Common myeloid progenitor, CD34-positive (primary cell): ENCODE measurements at regions of chr5 and their contacts with region 1.

Region 1: DNA sequence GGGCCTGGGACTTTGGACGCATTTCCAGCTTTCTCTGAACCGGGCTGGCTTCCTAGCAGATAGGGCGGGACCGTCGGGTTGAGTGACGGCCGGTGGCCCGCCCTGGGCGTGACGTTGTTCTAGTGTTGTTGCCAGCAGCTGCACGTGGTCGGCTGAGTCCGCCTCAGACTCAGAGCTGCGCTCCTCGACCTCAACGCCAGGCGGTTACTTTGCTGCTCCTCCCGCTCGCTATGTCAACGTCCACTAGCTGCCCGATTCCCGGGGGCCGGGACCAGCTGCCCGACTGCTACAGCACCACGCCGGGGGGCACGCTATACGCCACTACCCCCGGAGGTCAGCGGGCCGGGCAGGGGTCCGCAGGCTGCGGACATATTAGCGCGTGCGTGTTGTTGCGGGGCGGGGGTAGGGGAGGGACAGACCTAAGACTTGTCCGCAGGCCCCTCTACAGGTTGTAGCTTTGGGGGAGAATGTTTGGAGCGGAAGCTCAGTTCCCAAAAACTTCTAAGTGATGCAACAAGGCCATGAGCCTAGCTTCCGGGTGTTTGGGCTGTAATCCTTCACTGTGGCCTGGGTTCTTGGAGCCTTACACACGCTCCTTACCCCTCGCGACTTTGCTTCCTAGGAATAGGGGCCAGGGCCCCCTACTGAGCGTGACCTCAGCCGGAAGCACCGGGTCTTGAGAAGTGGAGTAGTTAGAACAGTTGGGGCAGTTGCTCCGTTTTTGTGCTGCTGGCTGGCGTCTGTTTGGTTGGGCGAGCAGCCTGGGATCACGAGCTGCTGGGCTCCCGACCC is at the start of gene EIF4EBP3:
- DNase-seq: peak; percentile 89 to 95 (median 94)
- H3K4me3 ChIP-seq: peak within 1 kb of the TSS; percentile 16 to 88 (median 62)
- H3K27ac ChIP-seq: peak within 1 kb of the TSS; percentile 42 to 83
- H3K4me1 ChIP-seq: peaks cover 8 to 34% (median 27%) of the 10 kb centered on the region in 4 experiments
- H3K27me3 ChIP-seq: no peaks in the 10 kb centered on the region

Region 2: GRCh38 chr5:140565024-140565779 is 17.5 kb after region 1 on chr5:
- CTCF ChIA-PET with region 1: interaction called, 29 read pairs
- POLR2A ChIA-PET with region 1: interaction called, 4 read pairs
- DNase-seq: no peak
- H3K4me3 ChIP-seq: peak overlapping the region; percentile 60 to 95 (median 81)
- H3K27ac ChIP-seq: peak overlapping the region; percentile 67 to 85
- H3K4me1 ChIP-seq: peaks cover 13 to 40% (median 33%) of the 10 kb centered on the region in 4 experiments
- H3K27me3 ChIP-seq: no peaks in the 10 kb centered on the region

Region 3: GRCh38 chr5:140588311-140589070 is 40.8 kb after region 1 on chr5:
- CTCF ChIA-PET with region 1: no interaction called
- POLR2A ChIA-PET with region 1: no interaction called
- DNase-seq: no peak
- H3K4me3 ChIP-seq: no peak overlapping the region
- H3K27ac ChIP-seq: no peak overlapping the region
- H3K4me1 ChIP-seq: peaks cover 0 to 10% (median under 1%) of the 10 kb centered on the region in 4 experiments
- H3K27me3 ChIP-seq: peaks cover 0 to 4% (median 0%) of the 10 kb centered on the region in 5 experiments

Region 4: GRCh38 chr5:140632150-140633020 is 84.7 kb after region 1 on chr5:
- CTCF ChIA-PET with region 1: interaction called, 69 read pairs
- POLR2A ChIA-PET with region 1: interaction called, 7 read pairs
- DNase-seq: peak in 2 of 3 donors; percentile 59 to 71
- H3K4me3 ChIP-seq: peak overlapping the region; percentile 27 to 74 (median 50)
- H3K27ac ChIP-seq: no peak overlapping the region
- H3K4me1 ChIP-seq: peaks cover 0 to 22% (median 17%) of the 10 kb centered on the region in 4 experiments
- H3K27me3 ChIP-seq: peaks cover 0 to 46% (median 26%) of the 10 kb centered on the region in 5 experiments

Region 5: DNA sequence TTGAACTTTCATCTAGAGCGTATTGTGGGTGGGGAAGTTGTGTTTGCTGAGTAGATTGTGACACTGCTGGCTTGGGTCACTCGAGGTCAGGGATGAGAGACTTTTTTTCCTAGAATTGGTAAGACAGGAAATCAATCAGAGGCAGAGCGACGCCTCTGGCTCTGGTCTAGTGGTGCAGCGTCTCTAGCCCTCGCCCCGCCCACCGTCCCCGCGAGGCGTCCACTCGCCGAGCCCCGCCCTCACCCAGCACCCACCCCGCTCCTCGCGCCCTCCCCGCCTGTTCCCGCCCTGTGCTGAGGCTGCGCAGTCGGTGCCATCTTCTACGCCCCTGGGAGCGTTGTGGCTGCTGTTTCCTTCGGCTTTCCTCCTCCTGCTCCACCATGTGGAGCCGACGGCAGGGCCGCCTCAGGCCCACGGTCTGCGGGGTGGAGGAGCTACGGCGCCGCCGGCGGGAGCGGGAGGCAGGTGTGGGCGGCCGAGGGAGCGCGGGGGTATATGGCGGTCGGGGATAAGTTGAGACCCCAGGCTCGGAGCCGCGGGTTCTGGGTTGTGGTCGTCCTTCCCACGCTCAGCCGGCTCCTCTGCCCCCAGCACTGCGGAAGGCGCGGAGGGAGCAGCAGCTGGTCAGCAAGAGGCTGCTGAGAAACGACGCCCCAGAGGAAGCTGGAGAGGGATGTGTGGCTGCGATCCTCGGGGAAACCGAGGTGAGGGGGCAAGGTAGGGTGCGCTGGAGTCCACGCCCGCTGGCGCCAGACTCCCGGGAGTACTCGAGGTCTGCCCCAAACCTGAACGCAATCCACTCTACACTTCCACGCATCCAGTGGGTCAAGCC is 91.7 kb after region 1 on chr5 and contains the start of gene TMCO6:
- CTCF ChIA-PET with region 1: interaction called, 69 read pairs
- POLR2A ChIA-PET with region 1: interaction called, 7 read pairs
- DNase-seq: peak; percentile 93 to 95 (median 95)
- H3K4me3 ChIP-seq: peak within 1 kb of the TSS; percentile 48 to 92 (median 76)
- H3K27ac ChIP-seq: peak within 1 kb of the TSS in 1 of 2 experiments; percentile 76
- H3K4me1 ChIP-seq: peaks cover 5 to 14% (median 12%) of the 10 kb centered on the region in 4 experiments
- H3K27me3 ChIP-seq: no peaks in the 10 kb centered on the region

Region 6: GRCh38 chr5:140647042-140647341 is 99.3 kb after region 1 on chr5:
- CTCF ChIA-PET with region 1: interaction called, 14 read pairs
- POLR2A ChIA-PET with region 1: interaction called, 13 read pairs
- DNase-seq: no peak
- H3K4me3 ChIP-seq: peak overlapping the region; percentile 84 to 98 (median 94)
- H3K27ac ChIP-seq: peak overlapping the region; percentile 96 to 98
- H3K4me1 ChIP-seq: peaks cover 0 to 19% (median 16%) of the 10 kb centered on the region in 4 experiments
- H3K27me3 ChIP-seq: no peaks in the 10 kb centered on the region